CD4-positive, alpha-beta T cell (primary cell): ENCODE measurements at regions of chr1 and their contacts with region 1.

Region 1: DNA sequence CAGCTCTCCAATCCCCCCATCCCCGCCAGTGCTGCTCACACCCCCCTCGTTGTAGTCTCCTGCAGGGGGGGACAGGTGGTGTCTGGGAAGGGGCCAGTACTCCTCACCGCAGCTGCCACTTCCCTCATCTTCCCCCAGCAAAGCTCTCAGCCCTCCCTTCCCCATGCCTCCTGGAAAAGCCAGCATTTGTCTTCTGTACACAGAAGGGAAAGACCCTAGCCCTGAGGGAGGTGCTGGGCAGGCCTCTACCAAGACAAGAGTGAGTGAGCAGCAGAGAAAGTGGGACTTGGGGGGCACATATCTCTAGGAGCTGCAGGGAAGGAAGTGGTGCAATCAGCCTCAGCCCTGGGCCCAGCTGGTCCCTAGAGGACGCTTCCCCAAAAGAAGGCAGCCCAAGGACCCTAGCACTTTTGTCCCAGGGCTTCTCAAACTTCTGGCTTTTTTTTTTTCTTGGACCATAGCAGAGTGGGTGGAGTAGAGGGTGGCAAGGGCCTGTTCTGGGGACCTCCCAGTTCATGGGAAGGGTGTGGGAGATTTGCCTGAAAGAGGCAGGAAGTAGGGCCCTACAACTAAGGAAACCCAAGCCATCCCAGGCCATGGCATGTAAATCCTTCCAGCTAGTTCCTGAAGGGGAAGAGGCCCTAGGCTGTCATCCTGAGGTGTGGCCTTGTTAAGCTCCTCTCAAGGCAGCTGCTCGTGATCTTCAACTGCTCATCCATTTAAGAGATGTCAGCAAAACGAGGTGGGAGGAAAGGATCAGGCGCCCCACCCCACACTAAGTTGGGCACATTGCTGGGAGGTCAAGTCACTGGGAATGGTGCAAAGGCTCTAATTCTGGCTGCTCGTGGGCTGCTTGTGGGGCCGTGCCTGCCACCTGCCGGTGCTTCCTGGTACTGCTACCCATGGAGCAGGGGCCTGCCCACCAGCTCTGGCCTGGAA is 12.6 kb downstream of the ZC3H12A start:
- DNase-seq: peak; percentile 62 to 89 (median 76)
- ATAC-seq: peak; percentile 75
- H3K4me3 ChIP-seq: no peak overlapping the region
- H3K4me3 Mint-ChIP-seq: no peak overlapping the region
- H3K27ac ChIP-seq: peak overlapping the region; percentile 14 to 15
- H3K27ac Mint-ChIP-seq: peak overlapping the region; percentile 84
- H3K4me1 ChIP-seq: peaks cover 22% of the 10 kb centered on the region
- H3K4me1 Mint-ChIP-seq: peaks cover 24% of the 10 kb centered on the region
- H3K27me3 ChIP-seq: no peaks in the 10 kb centered on the region
- H3K27me3 Mint-ChIP-seq: no peaks in the 10 kb centered on the region
- CTCF ChIP-seq: peak; percentile 98

Region 2: DNA sequence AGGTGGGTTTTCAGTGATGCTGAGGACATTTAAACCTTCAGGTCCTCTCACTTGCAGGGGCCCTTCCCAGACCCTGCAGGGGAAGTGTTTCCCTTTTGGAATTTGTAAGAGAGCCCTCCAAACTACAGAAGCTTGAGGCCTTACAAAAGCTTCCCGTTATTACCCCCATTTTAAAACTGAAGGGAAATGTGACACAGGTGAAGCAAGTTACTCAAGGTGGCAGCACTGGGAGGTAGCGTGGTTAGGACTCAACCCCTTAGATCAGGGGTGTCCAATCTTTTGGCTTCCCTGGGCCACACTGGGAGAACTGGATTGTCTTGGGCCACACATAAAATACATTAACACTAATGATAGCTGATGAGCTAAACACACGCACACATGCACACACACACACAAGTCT is 28.4 kb before region 1 on chr1:
- CTCF ChIA-PET with region 1: interaction called, 120 read pairs
- POLR2A ChIA-PET with region 1: interaction called, 17 read pairs
- intact Hi-C with region 1: loop called (anchors 1 kb)
- DNase-seq: peak in 2 of 14 experiments; percentile 19 to 36
- ATAC-seq: no peak
- H3K4me3 ChIP-seq: no peak overlapping the region
- H3K4me3 Mint-ChIP-seq: no peak overlapping the region
- H3K27ac ChIP-seq: no peak overlapping the region
- H3K27ac Mint-ChIP-seq: no peak overlapping the region
- H3K4me1 ChIP-seq: peaks cover 9% of the 10 kb centered on the region
- H3K4me1 Mint-ChIP-seq: peaks cover 6% of the 10 kb centered on the region
- H3K27me3 ChIP-seq: no peaks in the 10 kb centered on the region
- H3K27me3 Mint-ChIP-seq: no peaks in the 10 kb centered on the region
- CTCF ChIP-seq: no peak

Region 3: DNA sequence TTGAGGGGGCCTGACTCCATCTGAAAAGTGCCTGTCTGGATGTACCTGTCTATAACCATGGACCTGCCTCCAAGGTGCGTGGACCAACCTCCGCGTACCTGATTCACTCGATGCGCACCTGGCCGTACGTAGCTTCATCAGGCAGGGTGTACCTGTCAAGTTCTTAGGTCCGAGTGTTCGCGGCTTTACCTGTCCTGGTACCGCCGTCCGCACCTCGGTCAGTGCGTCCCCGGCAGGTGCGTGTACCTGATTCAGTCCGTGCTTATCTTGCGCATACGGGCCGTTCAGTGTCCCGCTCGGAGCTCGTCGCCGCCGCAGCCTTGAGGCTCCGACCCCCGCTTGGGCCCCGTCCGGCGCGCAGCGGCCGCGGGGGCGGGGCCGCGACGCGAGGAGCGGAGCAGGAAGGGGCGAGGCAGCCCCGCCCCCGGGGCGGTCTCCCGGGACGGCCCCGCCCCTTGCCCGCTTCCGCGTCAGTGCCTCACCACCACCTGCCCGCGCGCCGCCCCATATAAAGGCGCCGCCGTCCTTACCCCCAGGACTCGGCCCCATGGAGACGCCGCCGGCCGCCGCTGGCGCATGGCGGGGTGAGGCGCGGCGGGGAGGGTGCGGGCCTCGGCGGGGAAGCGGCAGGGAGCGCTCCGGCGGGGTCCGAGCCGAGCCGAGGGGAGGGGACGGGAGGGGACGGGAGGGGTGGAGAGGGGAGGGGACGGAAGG is 12.7 kb before region 1 on chr1 and contains the start of gene ZC3H12A:
- CTCF ChIA-PET with region 1: interaction called, 65 read pairs
- POLR2A ChIA-PET with region 1: interaction called, 136 read pairs
- intact Hi-C with region 1: no loop called
- DNase-seq: peak; percentile 83 to 98 (median 93)
- ATAC-seq: peak; percentile 61
- H3K4me3 ChIP-seq: peak within 1 kb of the TSS; percentile 92
- H3K4me3 Mint-ChIP-seq: peak within 1 kb of the TSS; percentile 97
- H3K27ac ChIP-seq: peak within 1 kb of the TSS; percentile 95 to 97
- H3K27ac Mint-ChIP-seq: peak within 1 kb of the TSS; percentile 100
- H3K4me1 ChIP-seq: peaks cover 69% of the 10 kb centered on the region
- H3K4me1 Mint-ChIP-seq: peaks cover 66% of the 10 kb centered on the region
- H3K27me3 ChIP-seq: no peaks in the 10 kb centered on the region
- H3K27me3 Mint-ChIP-seq: no peaks in the 10 kb centered on the region
- CTCF ChIP-seq: no peak
- total RNA-seq, gene ZC3H12A: 164 to 165 TPM

Region 4: DNA sequence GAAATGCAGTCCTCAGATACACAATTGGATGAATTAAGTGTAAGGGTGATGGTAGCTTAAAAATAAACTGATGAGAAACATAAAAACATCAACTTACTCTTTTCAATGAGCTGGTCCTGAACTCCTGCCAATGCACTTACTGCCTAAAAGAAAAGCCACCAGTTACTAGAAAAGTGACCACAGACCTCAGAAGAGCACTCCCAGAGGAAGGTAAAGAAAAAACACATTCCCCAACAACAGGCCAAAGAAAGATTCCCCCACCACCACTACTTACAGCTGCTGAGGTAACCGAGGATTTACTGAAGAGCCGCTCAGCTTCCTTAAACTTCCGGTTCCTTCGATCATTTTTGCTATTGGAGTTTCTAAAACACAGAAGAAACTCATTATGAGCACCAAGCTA is 22.2 kb after region 1 on chr1:
- CTCF ChIA-PET with region 1: interaction called, 13 read pairs
- POLR2A ChIA-PET with region 1: interaction called, 18 read pairs
- intact Hi-C with region 1: no loop called
- DNase-seq: no peak
- ATAC-seq: no peak
- H3K4me3 ChIP-seq: no peak overlapping the region
- H3K4me3 Mint-ChIP-seq: peak overlapping the region; percentile 68
- H3K27ac ChIP-seq: no peak overlapping the region
- H3K27ac Mint-ChIP-seq: no peak overlapping the region
- H3K4me1 ChIP-seq: peaks cover 14% of the 10 kb centered on the region
- H3K4me1 Mint-ChIP-seq: peaks cover 41% of the 10 kb centered on the region
- H3K27me3 ChIP-seq: no peaks in the 10 kb centered on the region
- H3K27me3 Mint-ChIP-seq: no peaks in the 10 kb centered on the region
- CTCF ChIP-seq: no peak

Region 5: DNA sequence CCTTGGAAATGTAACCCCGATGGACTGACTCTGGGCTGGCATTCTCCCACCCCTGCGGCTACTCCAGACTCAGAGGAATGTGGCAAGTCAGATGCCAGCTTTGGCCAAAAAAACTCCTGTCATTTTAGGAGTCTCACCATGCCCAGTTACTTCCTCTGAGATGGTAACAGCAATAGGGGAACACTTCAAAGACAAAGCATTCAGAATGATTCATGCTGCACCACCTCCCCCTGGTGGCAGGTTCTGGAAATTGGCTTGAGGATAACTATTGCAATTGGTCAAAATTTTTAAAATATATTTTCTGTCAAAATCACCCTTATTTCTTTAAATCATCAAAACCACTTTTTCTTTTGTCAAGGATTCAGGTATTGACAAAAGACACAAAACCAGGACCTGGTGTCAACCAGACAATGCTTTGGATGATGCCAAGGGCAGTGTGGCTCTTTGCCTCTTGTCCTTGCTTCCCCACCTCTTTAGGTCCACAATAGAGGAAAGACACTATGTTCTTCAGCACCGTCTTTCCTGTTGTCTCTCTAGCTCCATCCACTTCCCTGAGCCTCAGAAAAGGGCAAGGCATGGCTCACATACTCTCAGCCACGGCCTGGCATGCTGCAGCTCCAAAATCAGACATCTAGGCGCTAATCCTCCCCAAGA is 195.5 kb after region 1 on chr1:
- CTCF ChIA-PET with region 1: interaction called, 7 read pairs
- POLR2A ChIA-PET with region 1: interaction called, 4 read pairs
- intact Hi-C with region 1: loop called in 1 of 2 experiments (anchors 1 kb)
- DNase-seq: peak; percentile 67 to 86 (median 76)
- ATAC-seq: peak; percentile 98
- H3K4me3 ChIP-seq: no peak overlapping the region
- H3K4me3 Mint-ChIP-seq: no peak overlapping the region
- H3K27ac ChIP-seq: no peak overlapping the region
- H3K27ac Mint-ChIP-seq: peak overlapping the region; percentile 58
- H3K4me1 ChIP-seq: peaks cover 3% of the 10 kb centered on the region
- H3K4me1 Mint-ChIP-seq: peaks cover 9% of the 10 kb centered on the region
- H3K27me3 ChIP-seq: no peaks in the 10 kb centered on the region
- H3K27me3 Mint-ChIP-seq: no peaks in the 10 kb centered on the region
- CTCF ChIP-seq: peak; percentile 89

Region 6: GRCh38 chr1:37764414-37764825 is 277.5 kb after region 1 on chr1:
- CTCF ChIA-PET with region 1: no interaction called
- POLR2A ChIA-PET with region 1: no interaction called
- intact Hi-C with region 1: no loop called
- DNase-seq: peak in 7 of 14 experiments; percentile 4 to 46 (median 19)
- ATAC-seq: no peak
- H3K4me3 ChIP-seq: no peak overlapping the region
- H3K4me3 Mint-ChIP-seq: no peak overlapping the region
- H3K27ac ChIP-seq: no peak overlapping the region
- H3K27ac Mint-ChIP-seq: no peak overlapping the region
- H3K4me1 ChIP-seq: peaks cover 13% of the 10 kb centered on the region
- H3K4me1 Mint-ChIP-seq: peaks cover 4% of the 10 kb centered on the region
- H3K27me3 ChIP-seq: peaks cover 64 to 79% of the 10 kb centered on the region in 2 experiments
- H3K27me3 Mint-ChIP-seq: peaks cover 75% of the 10 kb centered on the region
- CTCF ChIP-seq: no peak